Left ventricle myocardium inferior (tissue), 1 donor: ENCODE measurements at regions of chr17 and their contacts with region 1.

Region 1: GRCh38 chr17:5055543-5055942 is 20.3 kb upstream of the SLC52A1 start:
- DNase-seq: no peak
- H3K4me3 ChIP-seq: no peak overlapping the region
- H3K27ac ChIP-seq: no peak overlapping the region
- H3K4me1 ChIP-seq: no peaks in the 10 kb centered on the region
- H3K27me3 ChIP-seq: no peaks in the 10 kb centered on the region
- CTCF ChIP-seq: no peak

Region 2: DNA sequence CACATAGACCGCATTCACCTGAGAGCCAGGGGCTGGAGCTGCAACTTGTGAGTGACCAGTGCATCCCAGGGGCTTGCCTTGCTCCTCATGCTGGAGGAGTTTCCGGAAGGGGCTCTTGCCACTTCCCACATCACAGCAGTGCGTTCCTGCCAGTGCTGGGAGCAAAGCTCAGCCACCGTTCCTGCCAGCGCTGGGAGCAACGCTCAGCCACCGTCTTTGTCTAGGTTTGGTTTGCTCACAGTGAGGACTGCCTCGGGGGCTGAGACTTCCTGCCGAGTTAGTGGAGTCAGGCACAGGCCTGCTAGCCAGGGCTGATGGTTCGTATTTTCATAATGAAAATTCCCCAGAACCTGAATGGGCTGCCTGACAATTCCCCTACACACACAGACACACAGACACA is 147.2 kb before region 1 on chr17:
- intact Hi-C with region 1: loop called (anchors 5 kb)
- DNase-seq: no peak
- H3K4me3 ChIP-seq: no peak overlapping the region
- H3K27ac ChIP-seq: peak overlapping the region; percentile 80
- H3K4me1 ChIP-seq: peaks cover 19% of the 10 kb centered on the region
- H3K27me3 ChIP-seq: peaks cover 4% of the 10 kb centered on the region
- CTCF ChIP-seq: no peak